ENCODE measurements at regions of chr1 and their contacts with region 1.

Region 1: GRCh38 chr1:169367486-169368405 is at the starts of genes BLZF1 and NME7:
- DNase-seq: peak; percentile 97
- ATAC-seq: peak; percentile 99
- H3K4me3 ChIP-seq: peak within 1 kb of the TSS; percentile 66 to 100 (median 92)
- H3K4me3 Mint-ChIP-seq: peak within 1 kb of the TSS; percentile 42
- H3K27ac ChIP-seq: peak within 1 kb of the TSS; percentile 66 to 86
- H3K27ac Mint-ChIP-seq: no peak within 1 kb of the TSS
- H3K4me1 ChIP-seq: peaks cover 6 to 12% of the 10 kb centered on the region in 2 donors
- H3K4me1 Mint-ChIP-seq: peaks cover 12% of the 10 kb centered on the region
- H3K27me3 ChIP-seq: no peaks in the 10 kb centered on the region
- H3K27me3 Mint-ChIP-seq: no peaks in the 10 kb centered on the region
- CTCF ChIP-seq: no peak
- total RNA-seq, gene BLZF1: 20.1 and 21.3 TPM in 2 replicates
- total RNA-seq, gene NME7: 13.1 and 14.3 TPM in 2 replicates

Region 2: DNA sequence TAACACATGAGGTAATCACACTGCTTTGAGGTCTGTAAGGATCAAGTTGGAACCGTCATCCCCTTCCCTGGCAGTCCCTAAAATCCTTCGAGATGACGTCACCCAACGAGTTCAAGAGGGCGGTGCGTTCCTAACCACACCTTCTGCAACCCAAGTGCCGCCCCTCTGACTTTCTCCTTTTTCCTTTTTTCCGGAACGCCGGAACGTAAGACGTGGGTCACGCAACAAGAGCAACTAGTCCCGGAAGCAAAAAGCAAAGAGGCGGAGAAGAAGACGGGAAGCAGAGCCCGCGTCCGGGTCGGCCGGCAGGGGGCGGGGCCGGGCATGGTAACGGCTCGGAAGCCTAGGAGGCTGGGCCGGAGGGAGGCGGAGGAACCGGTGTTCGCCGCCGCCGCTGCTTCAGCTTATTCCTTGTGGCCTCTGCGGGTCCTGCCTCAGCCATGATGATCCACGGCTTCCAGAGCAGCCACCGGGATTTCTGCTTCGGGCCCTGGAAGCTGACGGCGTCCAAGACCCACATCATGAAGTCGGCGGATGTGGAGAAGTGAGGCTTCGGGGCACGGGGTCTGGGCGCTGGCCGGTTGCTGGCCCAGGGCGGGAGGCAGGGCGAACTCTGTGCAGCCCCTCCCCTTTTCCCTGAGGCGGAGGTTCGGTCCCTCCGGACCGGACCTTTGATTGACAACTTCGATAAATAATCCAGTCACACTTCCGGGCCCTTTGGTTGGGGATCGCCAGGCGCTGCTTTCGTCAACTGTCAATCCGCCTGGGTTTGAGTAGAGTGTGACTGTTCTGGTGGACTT is 1188.9 kb before region 1 on chr1 and contains the start of gene TIPRL:
- CTCF ChIA-PET with region 1: no interaction called
- POLR2A ChIA-PET with region 1: no interaction called
- intact Hi-C with region 1: loop called (anchors 2 kb)
- DNase-seq: peak; percentile 96
- ATAC-seq: peak; percentile 92
- H3K4me3 ChIP-seq: peak within 1 kb of the TSS; percentile 87 to 97 (median 91)
- H3K4me3 Mint-ChIP-seq: peak within 1 kb of the TSS; percentile 47
- H3K27ac ChIP-seq: peak within 1 kb of the TSS; percentile 83 to 98
- H3K27ac Mint-ChIP-seq: peak within 1 kb of the TSS; percentile 15
- H3K4me1 ChIP-seq: peaks cover 17 to 18% of the 10 kb centered on the region in 2 donors
- H3K4me1 Mint-ChIP-seq: peaks cover 1% of the 10 kb centered on the region
- H3K27me3 ChIP-seq: peaks cover 0 to 5% (median 0%) of the 10 kb centered on the region in 4 experiments
- H3K27me3 Mint-ChIP-seq: peaks cover 4% of the 10 kb centered on the region
- CTCF ChIP-seq: peak; percentile 73
- total RNA-seq, gene TIPRL: 22.7 and 24.9 TPM in 2 replicates

Region 3: GRCh38 chr1:169106095-169106920 is 261.4 kb before region 1 on chr1 and contains the start of gene ATP1B1:
- CTCF ChIA-PET with region 1: no interaction called
- POLR2A ChIA-PET with region 1: no interaction called
- intact Hi-C with region 1: loop called (anchors 5 kb)
- DNase-seq: peak; percentile 81
- ATAC-seq: peak; percentile 95
- H3K4me3 ChIP-seq: peak within 1 kb of the TSS; percentile 17 to 78 (median 63)
- H3K4me3 Mint-ChIP-seq: no peak within 1 kb of the TSS
- H3K27ac ChIP-seq: no peak within 1 kb of the TSS
- H3K27ac Mint-ChIP-seq: peak within 1 kb of the TSS; percentile 63
- H3K4me1 ChIP-seq: peaks cover 17 to 18% of the 10 kb centered on the region in 2 donors
- H3K4me1 Mint-ChIP-seq: peaks cover 16% of the 10 kb centered on the region
- H3K27me3 ChIP-seq: peaks cover 0 to 45% (median 24%) of the 10 kb centered on the region in 4 experiments
- H3K27me3 Mint-ChIP-seq: peaks cover 37% of the 10 kb centered on the region
- CTCF ChIP-seq: peak; percentile 58
- total RNA-seq, gene ATP1B1: 1.7 and 3.1 TPM in 2 replicates

Region 4: GRCh38 chr1:169390303-169390702 is 22.6 kb after region 1 on chr1:
- CTCF ChIA-PET with region 1: no interaction called
- POLR2A ChIA-PET with region 1: no interaction called
- intact Hi-C with region 1: no loop called
- DNase-seq: no peak
- ATAC-seq: no peak
- H3K4me3 ChIP-seq: no peak overlapping the region
- H3K4me3 Mint-ChIP-seq: no peak overlapping the region
- H3K27ac ChIP-seq: no peak overlapping the region
- H3K27ac Mint-ChIP-seq: no peak overlapping the region
- H3K4me1 ChIP-seq: no peaks in the 10 kb centered on the region
- H3K4me1 Mint-ChIP-seq: no peaks in the 10 kb centered on the region
- H3K27me3 ChIP-seq: no peaks in the 10 kb centered on the region
- H3K27me3 Mint-ChIP-seq: no peaks in the 10 kb centered on the region
- CTCF ChIP-seq: no peak

Region 5: GRCh38 chr1:169509351-169509750 is 141.6 kb after region 1 on chr1:
- CTCF ChIA-PET with region 1: no interaction called
- POLR2A ChIA-PET with region 1: no interaction called
- intact Hi-C with region 1: no loop called
- DNase-seq: no peak
- ATAC-seq: no peak
- H3K4me3 ChIP-seq: no peak overlapping the region
- H3K4me3 Mint-ChIP-seq: no peak overlapping the region
- H3K27ac ChIP-seq: no peak overlapping the region
- H3K27ac Mint-ChIP-seq: no peak overlapping the region
- H3K4me1 ChIP-seq: peaks cover 3 to 5% of the 10 kb centered on the region in 2 donors
- H3K4me1 Mint-ChIP-seq: peaks cover 6% of the 10 kb centered on the region
- H3K27me3 ChIP-seq: no peaks in the 10 kb centered on the region
- H3K27me3 Mint-ChIP-seq: no peaks in the 10 kb centered on the region
- CTCF ChIP-seq: no peak

Region 6: DNA sequence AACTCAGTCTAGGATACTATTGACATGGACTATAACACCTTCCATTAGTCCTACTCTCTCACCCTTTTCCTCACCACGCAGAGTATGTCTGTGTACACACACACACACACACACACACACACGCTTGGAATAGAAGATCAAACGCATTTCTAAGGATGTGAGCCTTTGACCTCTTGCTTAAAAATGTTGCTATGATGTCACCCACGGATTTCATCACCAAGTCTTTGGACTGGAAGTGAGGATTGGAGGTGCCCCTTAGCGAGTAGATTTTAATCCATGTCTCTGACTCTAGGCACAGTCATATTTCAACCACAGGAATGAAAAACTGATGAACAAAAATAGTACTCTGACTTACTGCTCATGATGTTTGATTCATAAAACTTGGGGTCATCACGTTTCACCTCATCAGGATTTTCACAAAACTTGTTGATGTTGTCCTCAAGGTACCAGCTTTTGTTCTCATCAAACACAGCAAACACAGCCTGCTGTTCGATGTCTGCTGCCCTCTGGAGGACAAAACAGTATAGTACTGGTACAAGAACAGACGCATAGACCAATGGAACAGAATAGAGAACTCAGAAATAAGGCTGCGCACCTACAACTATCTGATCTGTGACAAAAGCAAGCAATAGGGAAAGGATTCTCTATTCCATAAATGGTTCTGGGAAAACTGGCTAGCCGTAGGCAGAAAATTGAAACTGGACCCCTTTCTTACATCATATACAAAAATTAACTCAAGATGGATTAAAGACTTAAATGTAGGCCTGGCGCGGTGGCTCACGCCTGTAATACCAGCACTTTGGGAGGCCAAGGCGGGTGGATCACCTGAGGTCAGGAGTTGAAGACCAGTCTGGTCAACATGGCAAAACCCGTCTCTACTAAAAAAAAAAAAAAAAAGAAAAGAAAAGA is 178.6 kb after region 1 on chr1:
- CTCF ChIA-PET with region 1: no interaction called
- POLR2A ChIA-PET with region 1: no interaction called
- intact Hi-C with region 1: loop called (anchors 5 kb)
- DNase-seq: peak; percentile 81
- ATAC-seq: peak; percentile 82
- H3K4me3 ChIP-seq: no peak overlapping the region
- H3K4me3 Mint-ChIP-seq: no peak overlapping the region
- H3K27ac ChIP-seq: no peak overlapping the region
- H3K27ac Mint-ChIP-seq: no peak overlapping the region
- H3K4me1 ChIP-seq: no peaks in the 10 kb centered on the region
- H3K4me1 Mint-ChIP-seq: no peaks in the 10 kb centered on the region
- H3K27me3 ChIP-seq: no peaks in the 10 kb centered on the region
- H3K27me3 Mint-ChIP-seq: peaks cover 13% of the 10 kb centered on the region
- CTCF ChIP-seq: peak; percentile 78

Region 7: DNA sequence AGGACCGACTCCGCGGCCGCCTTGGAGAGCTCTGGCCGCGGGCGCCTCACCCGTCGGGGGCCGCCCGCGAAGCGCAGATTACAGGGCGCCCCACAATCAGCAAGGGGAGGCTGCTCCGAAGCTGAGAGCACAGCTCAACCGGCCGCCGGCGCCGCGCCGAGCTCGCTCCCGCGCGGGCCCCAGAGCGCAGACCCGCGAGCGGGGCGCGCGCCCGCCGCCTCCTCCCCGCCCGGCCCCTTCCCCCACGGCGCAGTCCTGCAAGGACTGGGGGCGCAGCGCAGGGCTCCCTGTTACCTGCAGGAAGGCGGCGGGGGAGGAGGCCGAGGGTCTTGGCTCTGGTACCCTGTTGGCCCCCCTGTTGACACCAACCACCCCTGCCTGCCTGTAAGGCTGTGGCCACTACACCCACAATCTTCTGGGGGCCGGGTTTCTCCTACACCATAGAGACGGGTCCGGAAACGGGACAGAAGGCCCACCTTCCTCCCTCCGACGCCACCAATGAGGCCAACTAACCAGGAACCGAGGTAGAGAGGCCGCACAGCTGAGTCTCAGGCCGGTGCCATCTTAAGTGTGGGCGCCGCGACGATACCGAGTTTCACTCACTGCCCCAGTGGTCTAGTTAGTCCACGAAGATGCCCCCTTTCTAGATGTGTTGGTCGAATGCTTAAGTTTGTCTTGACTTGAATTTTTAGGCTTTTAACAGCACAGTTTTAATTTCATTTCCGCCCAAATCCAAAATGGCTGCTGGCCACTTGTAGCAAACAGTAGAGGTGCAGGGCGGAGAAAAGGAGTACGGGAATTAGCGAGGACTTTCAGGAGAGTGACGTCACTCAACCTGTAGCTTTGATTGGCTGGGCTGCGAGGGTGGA is 526.0 kb after region 1 on chr1 and contains the start of gene SCYL3:
- CTCF ChIA-PET with region 1: interaction called, 4 read pairs
- POLR2A ChIA-PET with region 1: interaction called, 3 read pairs
- intact Hi-C with region 1: loop called (anchors 1 kb)
- DNase-seq: peak; percentile 99
- ATAC-seq: peak; percentile 88
- H3K4me3 ChIP-seq: peak within 1 kb of the TSS; percentile 81 to 96 (median 85)
- H3K4me3 Mint-ChIP-seq: peak within 1 kb of the TSS; percentile 98
- H3K27ac ChIP-seq: peak within 1 kb of the TSS; percentile 97
- H3K27ac Mint-ChIP-seq: peak within 1 kb of the TSS; percentile 100
- H3K4me1 ChIP-seq: peaks cover 25 to 32% of the 10 kb centered on the region in 2 donors
- H3K4me1 Mint-ChIP-seq: peaks cover 44% of the 10 kb centered on the region
- H3K27me3 ChIP-seq: peaks cover 0 to 3% (median under 1%) of the 10 kb centered on the region in 4 experiments
- H3K27me3 Mint-ChIP-seq: peaks cover 15% of the 10 kb centered on the region
- CTCF ChIP-seq: no peak
- total RNA-seq, gene SCYL3: 17.6 and 18.4 TPM in 2 replicates

Measured in B cell (primary cell).